Left colon (tissue), 2 donors: ENCODE measurements at regions of chr5 and their contacts with region 1.

Region 1: DNA sequence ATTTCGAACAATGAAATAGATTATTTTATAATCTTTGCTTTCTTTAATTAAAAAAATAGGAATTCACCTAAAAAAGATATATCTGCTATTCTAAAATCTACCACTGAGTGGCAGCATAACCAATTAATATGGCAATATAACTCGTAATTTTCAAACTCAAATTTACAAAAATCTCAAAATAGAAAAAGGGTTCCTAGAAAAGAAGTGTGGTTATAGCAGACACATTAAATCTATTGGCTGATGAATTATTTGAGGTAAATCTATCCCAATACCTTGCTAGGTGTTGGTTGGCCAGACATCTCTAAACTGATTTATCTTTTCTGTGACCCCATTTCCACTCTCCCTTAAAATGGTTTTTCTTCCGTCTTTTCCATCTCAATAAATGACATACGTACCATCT is 30.2 kb upstream of the NRG2 start:
- DNase-seq: no peak
- ATAC-seq: no peak

Region 2: DNA sequence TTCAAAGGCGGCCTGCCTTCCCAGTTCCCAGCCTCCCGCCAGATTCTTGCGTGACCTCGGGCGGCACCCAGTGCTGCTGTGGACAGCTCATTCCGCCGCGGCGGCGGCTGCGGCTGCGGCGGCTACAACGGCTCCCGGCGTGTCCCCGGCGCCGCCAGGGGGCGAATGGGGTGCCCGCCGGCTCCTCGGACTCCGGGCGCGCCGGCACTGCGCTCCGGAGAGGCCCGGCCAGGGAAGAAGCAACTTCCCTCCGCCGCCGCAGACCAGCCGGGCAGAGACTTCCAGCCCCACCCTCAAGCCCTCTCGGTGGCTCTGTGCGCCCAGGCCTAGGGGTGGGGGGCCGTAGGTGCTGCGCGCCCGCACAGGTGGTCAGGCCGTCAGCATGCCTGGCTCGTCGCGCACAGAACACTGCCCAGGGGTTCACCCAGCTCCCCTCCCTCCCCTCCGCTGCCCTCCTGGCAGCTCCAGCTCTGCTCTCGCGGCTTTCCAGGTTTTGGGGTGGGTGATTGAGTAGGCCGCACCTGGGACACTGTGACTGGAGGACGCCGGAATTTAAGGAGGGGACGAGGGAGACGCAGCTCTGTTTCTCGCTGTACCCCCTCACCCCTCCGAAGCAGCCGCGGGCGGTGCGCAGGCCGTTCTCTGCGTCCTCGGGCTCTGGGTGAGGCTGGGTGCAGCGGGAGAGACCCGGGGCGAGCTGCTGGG is 72.7 kb after region 1 on chr5:
- intact Hi-C with region 1: loop called (anchors 5 to 10 kb)
- DNase-seq: peak; percentile 54 to 79
- ATAC-seq: peak; percentile 96

Region 3: GRCh38 chr5:140157032-140157803 is 83.9 kb after region 1 on chr5:
- intact Hi-C with region 1: loop called in 1 of 2 experiments (anchors 5 kb)
- DNase-seq: peak; percentile 82 to 93
- ATAC-seq: peak; percentile 96

Region 4: DNA sequence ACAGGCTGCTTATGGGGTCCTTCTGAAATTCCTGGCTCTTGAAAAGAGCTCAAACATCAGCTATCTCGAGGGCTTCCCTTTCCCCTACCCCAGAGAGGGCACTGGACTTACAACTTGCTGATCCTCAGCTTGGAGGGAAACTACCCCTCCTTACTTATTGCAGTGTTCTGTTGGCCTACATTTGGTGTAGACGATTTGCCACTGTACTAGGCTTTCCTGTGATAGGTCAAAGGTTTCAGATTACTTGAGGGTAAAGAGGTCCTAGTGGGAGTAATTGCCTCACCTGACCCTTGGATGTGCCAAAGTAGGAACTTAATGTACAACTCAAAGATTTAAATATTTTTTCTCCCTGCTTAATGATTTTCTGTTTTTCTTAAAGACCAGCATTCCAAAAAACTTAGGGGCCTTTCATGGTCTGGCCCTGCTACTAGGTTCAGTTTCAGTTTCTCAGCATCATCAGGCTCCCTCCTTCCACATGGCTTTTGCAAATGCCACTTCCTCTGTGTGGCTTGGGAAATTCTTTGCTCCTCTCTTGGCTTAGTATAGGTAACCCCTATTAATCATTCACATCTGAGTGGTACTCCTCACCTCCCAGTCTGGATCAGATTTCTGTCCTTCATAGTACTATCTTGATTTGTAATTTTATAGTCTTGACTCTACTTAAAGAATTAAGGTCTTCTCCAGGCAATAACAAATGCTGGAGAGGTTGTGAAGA is 134.1 kb after region 1 on chr5:
- intact Hi-C with region 1: no loop called
- DNase-seq: no peak
- ATAC-seq: no peak